ENCODE measurements at regions of chr9 and their contacts with region 1.

Region 1: DNA sequence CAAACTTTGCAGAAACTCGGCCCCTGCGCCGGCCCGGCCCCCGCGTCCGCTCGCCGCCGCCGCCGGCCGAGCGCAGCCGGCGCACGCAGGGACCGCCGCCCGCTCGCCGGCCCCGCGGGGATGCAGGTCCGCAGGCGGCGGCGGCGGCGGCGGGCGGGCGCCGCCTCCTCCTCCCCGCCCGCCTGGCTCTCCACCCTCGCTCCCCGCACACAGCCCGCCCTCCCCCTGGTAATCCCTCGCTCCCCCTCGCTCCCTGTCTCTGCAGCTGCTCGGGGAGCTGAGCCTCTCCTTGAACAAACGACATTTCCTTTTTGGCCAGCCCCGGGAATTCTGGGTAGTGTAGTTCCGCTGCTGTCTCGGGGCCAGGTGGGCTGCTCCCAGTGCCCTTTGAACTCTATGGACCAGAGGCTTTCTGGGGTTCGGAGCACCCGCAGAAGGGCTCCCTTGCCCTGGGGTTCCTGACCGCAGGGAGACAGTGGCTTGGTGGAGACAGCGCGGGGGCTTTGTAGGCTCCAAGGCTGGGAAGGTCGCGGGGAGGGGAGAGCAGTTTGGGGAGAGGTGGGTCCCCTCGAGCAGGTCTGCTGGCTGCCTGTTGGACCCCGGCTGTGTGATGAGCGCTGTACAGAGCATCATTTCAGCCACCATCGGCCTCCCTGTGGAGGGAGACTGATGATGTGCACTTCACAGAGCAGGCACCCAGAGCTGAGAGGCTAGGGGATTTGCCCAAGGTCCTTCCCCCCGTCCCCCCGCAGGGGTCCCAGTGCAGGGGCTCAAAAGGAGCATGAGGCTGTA is 1.8 kb upstream of the FAM78A start:
- DNase-seq: peak in 8 of 9 donors; percentile 47 to 77 (median 62)
- ATAC-seq: peak; percentile 67
- H3K4me3 ChIP-seq: peak overlapping the region; percentile 55
- H3K4me3 Mint-ChIP-seq: peak overlapping the region; percentile 83 to 97 (median 88)
- H3K27ac ChIP-seq: peak overlapping the region; percentile 96
- H3K27ac Mint-ChIP-seq: peak overlapping the region; percentile 84 to 95 (median 91)
- H3K4me1 ChIP-seq: peaks cover 21 to 23% of the 10 kb centered on the region in 2 donors
- H3K4me1 Mint-ChIP-seq: peaks cover 17 to 34% (median 27%) of the 10 kb centered on the region in 7 donors
- H3K27me3 ChIP-seq: no peaks in the 10 kb centered on the region
- H3K27me3 Mint-ChIP-seq: peaks cover 0 to 18% (median 0%) of the 10 kb centered on the region in 5 donors

Region 2: GRCh38 chr9:131310833-131311554 is 32.9 kb after region 1 on chr9:
- CTCF ChIA-PET with region 1: no interaction called
- POLR2A ChIA-PET with region 1: interaction called, 5 read pairs
- intact Hi-C with region 1: loop called in 1 of 2 experiments (anchors 2 kb)
- DNase-seq: peak; percentile 41 to 79 (median 74)
- ATAC-seq: peak; percentile 92
- H3K4me3 ChIP-seq: peak overlapping the region; percentile 39
- H3K4me3 Mint-ChIP-seq: peak overlapping the region; percentile 49 to 78 (median 70)
- H3K27ac ChIP-seq: peak overlapping the region; percentile 43
- H3K27ac Mint-ChIP-seq: peak overlapping the region; percentile 63 to 92 (median 80)
- H3K4me1 ChIP-seq: peaks cover 13 to 14% of the 10 kb centered on the region in 2 donors
- H3K4me1 Mint-ChIP-seq: peaks cover 0 to 19% (median 15%) of the 10 kb centered on the region in 7 donors
- H3K27me3 ChIP-seq: no peaks in the 10 kb centered on the region
- H3K27me3 Mint-ChIP-seq: no peaks in the 10 kb centered on the region

Region 3: GRCh38 chr9:131334629-131335367 is 56.7 kb after region 1 on chr9:
- CTCF ChIA-PET with region 1: interaction called, 10 read pairs
- POLR2A ChIA-PET with region 1: interaction called, 5 read pairs
- intact Hi-C with region 1: loop called (anchors 2 to 5 kb)
- DNase-seq: no peak
- ATAC-seq: no peak
- H3K4me3 ChIP-seq: no peak overlapping the region
- H3K4me3 Mint-ChIP-seq: no peak overlapping the region
- H3K27ac ChIP-seq: no peak overlapping the region
- H3K27ac Mint-ChIP-seq: no peak overlapping the region
- H3K4me1 ChIP-seq: peaks cover 0 to 3% of the 10 kb centered on the region in 2 donors
- H3K4me1 Mint-ChIP-seq: peaks cover 4 to 7% (median 4%) of the 10 kb centered on the region in 7 donors
- H3K27me3 ChIP-seq: no peaks in the 10 kb centered on the region
- H3K27me3 Mint-ChIP-seq: peaks cover 0 to 5% (median 0%) of the 10 kb centered on the region in 5 donors

Measured in naive thymus-derived CD4-positive, alpha-beta T cell (primary cell).